ENCODE measurements at regions of chr19 and their contacts with region 1.

Region 1: DNA sequence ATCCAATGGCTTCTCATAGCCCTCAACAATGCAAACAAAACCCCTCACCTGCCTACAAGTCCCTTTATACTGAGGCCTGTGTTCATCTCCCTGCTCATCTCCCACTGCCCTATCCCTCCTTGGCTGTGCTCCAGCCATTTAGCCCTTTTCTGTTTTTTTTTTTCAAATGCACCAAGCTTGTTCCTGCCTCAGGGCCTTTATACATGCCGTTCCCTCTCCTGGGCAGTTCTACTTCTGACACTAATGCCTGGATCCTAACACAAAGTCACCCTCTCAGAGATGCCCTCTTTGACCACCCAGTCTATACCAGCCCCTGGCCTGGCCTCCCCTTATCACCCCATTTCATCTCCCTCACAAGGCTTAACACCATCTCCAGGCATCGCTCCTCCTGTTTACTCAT is 26.9 kb downstream of the ZNF574 start:
- DNase-seq: no peak
- H3K4me3 ChIP-seq: no peak overlapping the region
- H3K27ac ChIP-seq: no peak overlapping the region
- H3K4me1 ChIP-seq: no peaks in the 10 kb centered on the region
- H3K27me3 ChIP-seq: no peaks in the 10 kb centered on the region
- CTCF ChIP-seq: no peak

Region 2: GRCh38 chr19:41951686-41952172 is 151.1 kb before region 1 on chr19:
- CTCF ChIA-PET with region 1: no interaction called
- dilution Hi-C with region 1: no loop called
- in situ Hi-C with region 1: no loop called
- intact Hi-C with region 1: no loop called
- DNase-seq: peak; percentile 48
- H3K4me3 ChIP-seq: no peak overlapping the region
- H3K27ac ChIP-seq: no peak overlapping the region
- H3K4me1 ChIP-seq: no peaks in the 10 kb centered on the region
- H3K27me3 ChIP-seq: no peaks in the 10 kb centered on the region
- CTCF ChIP-seq: peak; percentile 97 to 99

Region 3: GRCh38 chr19:42051166-42052118 is 51.4 kb before region 1 on chr19:
- CTCF ChIA-PET with region 1: no interaction called
- dilution Hi-C with region 1: no loop called
- in situ Hi-C with region 1: no loop called
- intact Hi-C with region 1: no loop called
- DNase-seq: peak; percentile 99
- H3K4me3 ChIP-seq: no peak overlapping the region
- H3K27ac ChIP-seq: peak overlapping the region; percentile 69
- H3K4me1 ChIP-seq: peaks cover 38% of the 10 kb centered on the region
- H3K27me3 ChIP-seq: no peaks in the 10 kb centered on the region
- CTCF ChIP-seq: no peak

Region 4: GRCh38 chr19:42149447-42150202 is 46.7 kb after region 1 on chr19:
- CTCF ChIA-PET with region 1: no interaction called
- dilution Hi-C with region 1: loop called (anchors 5 kb)
- in situ Hi-C with region 1: no loop called
- intact Hi-C with region 1: no loop called
- DNase-seq: no peak
- H3K4me3 ChIP-seq: no peak overlapping the region
- H3K27ac ChIP-seq: no peak overlapping the region
- H3K4me1 ChIP-seq: no peaks in the 10 kb centered on the region
- H3K27me3 ChIP-seq: peaks cover 3% of the 10 kb centered on the region
- CTCF ChIP-seq: no peak